T-cell (primary cell): ENCODE measurements at regions of chr22 and their contacts with region 1.

Region 1: DNA sequence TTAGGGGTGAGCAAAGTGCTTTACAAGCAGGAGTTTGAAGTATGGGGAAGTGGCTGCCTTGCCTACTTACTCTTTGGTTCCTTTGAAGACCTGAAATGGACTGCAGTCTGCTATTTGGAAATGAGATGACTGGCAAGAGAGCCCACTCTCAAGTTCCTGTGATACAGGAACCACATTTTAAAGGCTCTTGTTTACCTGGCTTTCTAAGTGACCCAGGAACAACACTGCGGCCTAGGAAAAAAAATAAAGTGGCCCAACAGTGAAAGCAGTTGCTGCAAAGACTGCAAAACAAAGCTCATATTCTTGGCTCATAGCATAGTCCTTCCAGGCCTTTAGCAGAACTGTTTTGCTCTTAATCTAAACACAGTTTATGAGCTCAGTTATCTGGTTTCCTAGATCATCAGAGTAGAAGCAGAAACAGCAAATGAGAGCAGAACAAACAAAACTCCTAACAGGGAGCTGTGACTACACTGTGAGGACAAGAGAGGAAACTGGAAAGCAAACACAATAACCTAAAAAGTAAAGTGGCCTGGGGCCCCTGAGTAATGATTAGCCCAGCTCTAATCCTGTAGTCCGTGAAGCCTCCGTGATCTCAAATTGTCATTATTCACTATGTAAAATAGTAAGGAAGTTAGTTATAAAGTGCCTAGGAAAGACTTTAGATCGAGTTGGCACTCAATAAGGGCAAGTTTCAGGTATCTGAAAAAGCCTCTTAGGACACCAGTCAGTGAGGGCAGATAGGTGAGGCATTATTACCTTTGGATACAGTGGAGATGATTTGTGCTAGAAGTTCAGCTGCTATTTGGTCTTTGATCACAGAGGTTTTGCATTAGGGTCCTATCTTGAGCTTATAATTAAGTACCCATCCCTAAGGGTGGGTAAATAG is 11.5 kb downstream of the CCDC117 start:
- DNase-seq: no peak
- ATAC-seq: no peak
- H3K4me3 ChIP-seq: no peak overlapping the region
- H3K4me3 Mint-ChIP-seq: no peak overlapping the region
- H3K27ac ChIP-seq: no peak overlapping the region
- H3K27ac Mint-ChIP-seq: peak overlapping the region in 1 of 2 donors; percentile 34
- H3K4me1 ChIP-seq: no peaks in the 10 kb centered on the region
- H3K4me1 Mint-ChIP-seq: peaks cover 0 to 20% (median 17%) of the 10 kb centered on the region in 3 donors
- H3K27me3 ChIP-seq: no peaks in the 10 kb centered on the region
- H3K27me3 Mint-ChIP-seq: no peaks in the 10 kb centered on the region

Region 2: DNA sequence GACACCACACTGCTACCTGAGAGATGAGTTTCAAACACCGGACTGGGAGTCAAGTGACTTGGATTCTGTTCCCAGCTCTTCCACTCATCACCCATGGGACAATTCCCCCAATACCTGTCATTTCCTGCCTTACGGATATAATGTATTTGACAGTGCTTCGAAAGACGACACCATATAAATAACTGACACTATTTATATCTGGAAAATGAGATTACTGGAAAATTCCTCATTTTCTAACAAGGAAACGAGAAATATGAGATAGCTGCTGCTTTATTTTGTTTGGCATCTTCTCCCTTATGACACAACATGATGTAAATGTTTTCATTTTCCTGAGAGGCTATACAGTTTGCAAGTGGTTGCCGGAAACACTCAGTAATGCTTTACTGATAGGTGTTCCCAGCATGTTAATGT is 33.6 kb before region 1 on chr22:
- CTCF ChIA-PET with region 1: interaction called, 3 read pairs
- POLR2A ChIA-PET with region 1: interaction called in 1 of 2 experiments, 11 read pairs
- DNase-seq: no peak
- ATAC-seq: no peak
- H3K4me3 ChIP-seq: no peak overlapping the region
- H3K4me3 Mint-ChIP-seq: no peak overlapping the region
- H3K27ac ChIP-seq: no peak overlapping the region
- H3K27ac Mint-ChIP-seq: no peak overlapping the region
- H3K4me1 ChIP-seq: peaks cover 0 to 14% of the 10 kb centered on the region in 2 experiments
- H3K4me1 Mint-ChIP-seq: peaks cover 10 to 11% (median 10%) of the 10 kb centered on the region in 3 donors
- H3K27me3 ChIP-seq: no peaks in the 10 kb centered on the region
- H3K27me3 Mint-ChIP-seq: no peaks in the 10 kb centered on the region